Astrocyte of the cerebellum (primary cell): ENCODE measurements at regions of chr16 and their contacts with region 1.

Region 1: GRCh38 chr16:48676836-48677235 is 66.9 kb upstream of the N4BP1 start:
- DNase-seq: peak; percentile 6
- H3K4me3 ChIP-seq: no peak overlapping the region
- CTCF ChIP-seq: no peak

Region 2: DNA sequence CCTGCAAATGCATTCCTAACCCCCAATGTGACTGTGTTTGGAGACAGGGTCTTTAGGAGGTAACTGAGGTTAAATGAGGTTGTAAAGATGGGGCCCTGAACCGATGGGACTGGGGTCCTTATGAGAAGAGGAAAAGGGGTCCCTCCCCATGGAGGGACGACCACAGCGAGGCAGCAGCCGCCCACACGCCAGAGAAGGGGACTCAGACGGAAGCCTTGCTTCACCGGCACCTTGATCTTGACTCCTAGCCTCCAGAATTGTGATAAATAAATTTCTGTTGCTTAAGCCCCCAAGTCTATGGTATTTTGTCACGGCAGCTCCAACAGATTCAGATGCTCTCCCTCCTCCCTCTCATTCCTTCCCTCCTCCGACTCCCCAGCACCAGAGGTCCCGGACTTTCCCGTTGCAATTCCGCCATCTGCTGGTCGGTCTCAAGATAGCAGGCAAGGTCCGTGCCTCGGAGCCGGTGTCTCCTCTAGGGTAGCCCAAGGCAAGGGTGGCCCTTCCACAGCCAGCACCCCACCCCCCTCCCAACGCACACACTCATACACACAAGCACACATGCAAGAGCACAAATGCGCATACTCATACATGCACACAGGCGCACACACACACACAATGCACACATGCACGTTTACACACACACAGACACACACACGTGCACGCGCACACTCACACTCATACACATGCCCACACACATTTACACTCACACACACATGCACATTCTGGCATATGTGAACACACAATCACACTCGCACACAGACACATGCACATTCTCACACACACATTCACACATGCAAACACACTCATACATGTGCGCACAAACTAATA is 673.6 kb after region 1 on chr16:
- in situ Hi-C with region 1: loop called (anchors 10 kb)
- DNase-seq: no peak
- H3K4me3 ChIP-seq: no peak overlapping the region
- CTCF ChIP-seq: peak; percentile 84